ENCODE measurements at regions of chr5 and their contacts with region 1.

Region 1: GRCh38 chr5:75023368-75024159 is 28.8 kb downstream of the GCNT4 start:
- DNase-seq: peak; percentile 55
- H3K4me3 Mint-ChIP-seq: peak overlapping the region; percentile 8
- H3K27ac Mint-ChIP-seq: no peak overlapping the region
- H3K4me1 Mint-ChIP-seq: peaks cover 32% of the 10 kb centered on the region
- H3K27me3 Mint-ChIP-seq: no peaks in the 10 kb centered on the region

Region 2: GRCh38 chr5:75037135-75037534 is 13.6 kb after region 1 on chr5:
- CTCF ChIA-PET with region 1: interaction called, 4 read pairs
- intact Hi-C with region 1: loop called (anchors 2 kb)
- DNase-seq: peak; percentile 62
- H3K4me3 Mint-ChIP-seq: no peak overlapping the region
- H3K27ac Mint-ChIP-seq: no peak overlapping the region
- H3K4me1 Mint-ChIP-seq: peaks cover 56% of the 10 kb centered on the region
- H3K27me3 Mint-ChIP-seq: no peaks in the 10 kb centered on the region

Region 3: GRCh38 chr5:75306746-75307145 is 283.2 kb after region 1 on chr5:
- CTCF ChIA-PET with region 1: no interaction called
- intact Hi-C with region 1: no loop called
- DNase-seq: no peak
- H3K4me3 Mint-ChIP-seq: no peak overlapping the region
- H3K27ac Mint-ChIP-seq: no peak overlapping the region
- H3K4me1 Mint-ChIP-seq: no peaks in the 10 kb centered on the region
- H3K27me3 Mint-ChIP-seq: peaks cover 5% of the 10 kb centered on the region

Region 4: DNA sequence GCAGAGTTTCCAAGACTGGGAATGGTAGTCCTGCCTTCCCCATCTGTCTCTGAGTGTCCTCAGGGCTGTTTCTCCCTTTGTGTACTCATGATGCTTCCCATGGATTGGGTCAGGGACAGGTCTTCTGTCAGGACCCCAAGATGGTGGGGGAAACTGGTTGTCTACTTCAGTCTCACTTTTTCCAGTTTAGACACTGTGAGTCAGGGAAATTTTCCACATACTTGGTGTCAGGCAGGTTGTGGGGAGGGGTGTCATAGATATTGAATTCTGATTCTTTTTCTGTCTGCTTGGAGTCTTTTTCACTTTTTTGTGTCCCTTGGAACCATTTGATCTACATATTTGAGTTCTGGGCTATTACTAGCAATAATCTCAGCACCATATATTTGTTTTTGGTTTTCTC is 498.5 kb after region 1 on chr5:
- CTCF ChIA-PET with region 1: no interaction called
- intact Hi-C with region 1: no loop called
- DNase-seq: peak; percentile 16
- H3K4me3 Mint-ChIP-seq: no peak overlapping the region
- H3K27ac Mint-ChIP-seq: peak overlapping the region; percentile 32
- H3K4me1 Mint-ChIP-seq: peaks cover 73% of the 10 kb centered on the region
- H3K27me3 Mint-ChIP-seq: no peaks in the 10 kb centered on the region